Activated naive CD4-positive, alpha-beta T cell treated with anti-CD3 and anti-CD28 coated beads, Interleukin-2, amount 10 ng/mL, durations not matched to agents 7 days and 5 days (primary cell): ENCODE measurements at regions of chr5 and their contacts with region 1.

Region 1: GRCh38 chr5:172932313-172933017 is 26.8 kb upstream of the RPL26L1 start:
- DNase-seq: peak; percentile 76
- H3K4me3 Mint-ChIP-seq: no peak overlapping the region
- H3K27ac Mint-ChIP-seq: no peak overlapping the region
- H3K4me1 Mint-ChIP-seq: peaks cover 5% of the 10 kb centered on the region
- H3K27me3 Mint-ChIP-seq: no peaks in the 10 kb centered on the region

Region 2: DNA sequence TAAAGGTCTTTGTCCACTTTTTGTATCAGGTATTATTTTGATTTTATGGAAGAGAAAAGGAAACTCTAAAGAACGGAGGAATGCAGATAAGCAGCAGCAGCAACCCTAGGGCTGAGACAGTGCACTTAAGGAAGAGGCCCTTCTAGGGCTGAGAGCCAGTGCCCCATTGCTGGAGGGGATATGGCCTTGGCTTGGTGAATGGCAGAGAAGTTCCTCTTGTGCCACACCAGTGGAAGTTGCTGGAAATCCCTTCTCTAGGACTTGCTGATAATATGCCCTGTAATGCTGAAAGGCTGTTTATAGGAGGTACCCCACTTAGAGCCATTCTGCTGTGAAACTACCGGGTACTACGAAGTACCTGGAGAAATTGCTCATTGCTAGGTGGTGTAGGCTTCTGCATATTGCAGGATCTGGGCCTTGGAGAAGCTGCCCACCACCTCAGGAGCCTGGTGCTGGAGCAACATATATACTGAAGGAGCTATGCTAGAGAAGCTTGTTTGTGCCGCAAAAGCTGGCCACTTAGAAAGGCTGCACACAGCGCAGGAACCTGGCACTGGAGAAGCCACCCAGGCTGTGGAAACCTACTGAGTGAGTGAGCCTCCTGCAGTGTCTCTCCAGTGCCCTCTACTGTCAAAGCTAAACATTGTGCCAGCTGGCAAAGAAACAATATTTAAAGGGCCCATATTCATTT is 639.3 kb before region 1 on chr5:
- CTCF ChIA-PET with region 1: no interaction called
- DNase-seq: peak; percentile 78
- H3K4me3 Mint-ChIP-seq: no peak overlapping the region
- H3K27ac Mint-ChIP-seq: no peak overlapping the region
- H3K4me1 Mint-ChIP-seq: peaks cover 4% of the 10 kb centered on the region
- H3K27me3 Mint-ChIP-seq: peaks cover 40% of the 10 kb centered on the region

Region 3: GRCh38 chr5:172770675-172771438 is 161.6 kb before region 1 on chr5 and contains the start of gene DUSP1:
- CTCF ChIA-PET with region 1: interaction called, 18 read pairs
- DNase-seq: peak; percentile 97
- H3K4me3 Mint-ChIP-seq: peak within 1 kb of the TSS; percentile 86
- H3K27ac Mint-ChIP-seq: peak within 1 kb of the TSS; percentile 98
- H3K4me1 Mint-ChIP-seq: peaks cover 59% of the 10 kb centered on the region
- H3K27me3 Mint-ChIP-seq: no peaks in the 10 kb centered on the region

Region 4: DNA sequence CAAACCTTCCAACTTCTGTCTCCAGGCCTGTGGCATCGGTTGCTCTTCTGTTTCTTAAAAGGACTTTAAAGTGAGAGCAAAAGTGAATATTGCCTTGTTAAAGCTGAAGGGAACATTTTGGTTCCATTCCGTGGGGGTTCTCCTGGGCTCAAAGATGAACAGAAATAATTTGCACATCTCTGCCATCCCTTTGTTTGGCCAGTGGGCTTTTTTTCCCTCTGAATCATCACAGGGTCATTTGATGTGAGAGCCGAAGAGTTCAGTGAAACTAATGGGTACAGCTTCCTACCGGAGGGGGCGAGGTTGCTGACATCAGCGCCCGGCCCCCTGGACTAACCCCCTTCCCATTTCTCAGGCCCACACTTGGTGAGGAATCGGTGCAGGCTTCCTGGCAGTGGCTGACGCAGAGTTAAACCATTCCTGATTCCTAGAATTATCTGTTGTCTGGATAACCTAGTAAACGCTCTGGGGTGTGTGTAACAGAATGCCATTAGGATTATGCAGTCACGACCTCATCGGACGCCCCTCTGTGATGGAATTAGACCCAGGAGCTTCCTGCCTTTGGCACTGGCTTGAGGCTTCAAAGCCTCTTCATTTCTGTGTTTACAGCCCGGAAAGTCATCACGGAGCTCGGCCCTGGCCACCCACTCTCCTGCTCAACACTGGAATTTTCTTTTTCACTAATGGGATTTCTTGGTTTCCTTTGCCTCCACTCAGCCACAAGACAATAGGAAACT is 34.8 kb before region 1 on chr5:
- CTCF ChIA-PET with region 1: interaction called, 11 read pairs
- DNase-seq: peak; percentile 41
- H3K4me3 Mint-ChIP-seq: peak overlapping the region; percentile 44
- H3K27ac Mint-ChIP-seq: peak overlapping the region; percentile 84
- H3K4me1 Mint-ChIP-seq: peaks cover 15% of the 10 kb centered on the region
- H3K27me3 Mint-ChIP-seq: no peaks in the 10 kb centered on the region

Region 5: GRCh38 chr5:173099461-173099860 is 167.0 kb after region 1 on chr5:
- CTCF ChIA-PET with region 1: no interaction called
- DNase-seq: no peak
- H3K4me3 Mint-ChIP-seq: no peak overlapping the region
- H3K27ac Mint-ChIP-seq: no peak overlapping the region
- H3K4me1 Mint-ChIP-seq: peaks cover 4% of the 10 kb centered on the region
- H3K27me3 Mint-ChIP-seq: no peaks in the 10 kb centered on the region